ENCODE measurements at regions of chr20 and their contacts with region 1.

Region 1: GRCh38 chr20:3781153-3781910 is at the start of gene SPEF1:
- DNase-seq: peak; percentile 86
- H3K4me3 ChIP-seq: peak within 1 kb of the TSS; percentile 43
- H3K27me3 ChIP-seq: no peaks in the 10 kb centered on the region
- CTCF ChIP-seq: peak; percentile 60
- polyA plus RNA-seq, gene SPEF1: 0.07 and 0.17 TPM in 2 replicates

Region 2: DNA sequence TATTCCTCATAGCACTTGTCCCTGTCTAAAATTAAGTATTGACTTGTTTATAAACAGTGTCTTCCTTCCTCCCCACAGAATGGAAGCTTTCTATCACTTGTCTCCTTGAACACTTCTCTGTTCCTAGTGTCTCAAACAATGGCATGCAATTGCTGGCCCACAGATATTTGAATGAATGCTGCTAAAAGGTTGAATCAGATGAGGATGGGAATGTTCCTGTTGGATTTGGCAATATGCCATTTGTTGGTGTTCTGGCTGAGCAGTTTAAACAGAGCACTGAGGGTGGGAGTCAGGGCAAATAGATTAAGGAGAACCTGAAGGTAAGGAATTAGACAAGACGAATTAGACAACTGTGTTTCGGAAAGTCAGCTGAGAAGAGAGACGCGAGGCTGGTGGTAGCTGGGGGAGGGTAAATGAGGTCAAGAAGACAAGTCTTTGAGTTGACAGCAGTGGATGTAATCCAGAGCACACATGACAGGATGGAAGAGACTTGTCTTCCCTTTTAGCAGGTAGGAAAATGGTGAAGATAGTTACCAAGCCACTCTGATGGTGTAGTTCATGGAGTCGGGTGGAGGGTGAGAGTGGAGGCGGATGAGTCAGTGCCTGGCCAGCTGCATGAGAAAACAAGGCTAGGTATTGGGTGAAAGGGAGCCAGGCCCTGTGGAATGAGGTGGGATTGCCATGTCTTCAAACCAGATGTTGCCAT is 796.2 kb before region 1 on chr20:
- CTCF ChIA-PET with region 1: no interaction called
- POLR2A ChIA-PET with region 1: no interaction called
- DNase-seq: no peak
- H3K4me3 ChIP-seq: no peak overlapping the region
- H3K27me3 ChIP-seq: no peaks in the 10 kb centered on the region
- CTCF ChIP-seq: no peak

Region 3: GRCh38 chr20:3515379-3516170 is 265.8 kb before region 1 on chr20:
- CTCF ChIA-PET with region 1: no interaction called
- POLR2A ChIA-PET with region 1: no interaction called
- DNase-seq: peak; percentile 13
- H3K4me3 ChIP-seq: no peak overlapping the region
- H3K27me3 ChIP-seq: no peaks in the 10 kb centered on the region
- CTCF ChIP-seq: no peak

Region 4: DNA sequence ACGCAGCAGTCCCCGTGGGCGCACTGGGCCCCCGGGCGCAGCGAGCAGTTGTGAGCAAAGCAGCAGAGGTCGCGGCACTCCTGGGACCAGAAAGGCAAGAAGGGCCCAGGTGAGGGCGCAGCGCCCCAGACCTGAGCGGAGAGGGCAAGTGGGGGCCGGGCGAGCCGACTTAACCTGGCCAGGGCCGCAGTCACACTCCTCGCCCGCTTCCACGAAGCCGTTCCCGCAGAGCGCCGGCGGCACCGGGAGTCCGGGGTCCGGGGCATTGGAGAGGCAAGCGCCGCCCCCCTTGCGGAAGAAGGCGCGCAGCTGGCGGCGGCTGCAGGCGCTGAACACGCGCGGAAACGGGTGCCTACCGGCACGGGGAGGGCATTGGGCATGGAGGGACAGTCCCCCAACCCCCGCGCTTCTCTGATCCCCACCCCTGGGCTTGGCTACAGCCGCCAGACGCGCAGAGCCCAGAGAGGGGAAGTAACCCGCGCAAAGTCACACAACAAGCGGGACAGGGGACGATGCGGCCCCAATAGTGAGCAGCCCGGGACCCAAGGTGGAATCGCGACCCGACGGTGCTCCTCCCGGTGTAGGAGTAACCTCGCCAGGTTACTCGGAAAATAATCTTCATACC is 108.7 kb before region 1 on chr20:
- CTCF ChIA-PET with region 1: interaction called, 11 read pairs
- POLR2A ChIA-PET with region 1: no interaction called
- DNase-seq: no peak
- H3K4me3 ChIP-seq: no peak overlapping the region
- H3K27me3 ChIP-seq: no peaks in the 10 kb centered on the region
- CTCF ChIP-seq: no peak

Region 5: GRCh38 chr20:3767427-3768341 is 13.6 kb before region 1 on chr20 and contains the start of gene ADISSP:
- CTCF ChIA-PET with region 1: interaction called, 14 read pairs
- POLR2A ChIA-PET with region 1: interaction called, 3 read pairs
- DNase-seq: peak; percentile 85
- H3K4me3 ChIP-seq: peak within 1 kb of the TSS; percentile 73
- H3K27me3 ChIP-seq: no peaks in the 10 kb centered on the region
- CTCF ChIP-seq: peak; percentile 30
- polyA plus RNA-seq, gene ADISSP: 21.3 and 34.3 TPM in 2 replicates

Region 6: GRCh38 chr20:4427940-4428586 is 646.7 kb after region 1 on chr20:
- CTCF ChIA-PET with region 1: no interaction called
- POLR2A ChIA-PET with region 1: no interaction called
- DNase-seq: no peak
- H3K4me3 ChIP-seq: no peak overlapping the region
- H3K27me3 ChIP-seq: no peaks in the 10 kb centered on the region
- CTCF ChIP-seq: no peak

Measured in BJ (cell line).